Kidney (tissue), 22 donors: ENCODE measurements at regions of chrX and their contacts with region 1.

Region 1: DNA sequence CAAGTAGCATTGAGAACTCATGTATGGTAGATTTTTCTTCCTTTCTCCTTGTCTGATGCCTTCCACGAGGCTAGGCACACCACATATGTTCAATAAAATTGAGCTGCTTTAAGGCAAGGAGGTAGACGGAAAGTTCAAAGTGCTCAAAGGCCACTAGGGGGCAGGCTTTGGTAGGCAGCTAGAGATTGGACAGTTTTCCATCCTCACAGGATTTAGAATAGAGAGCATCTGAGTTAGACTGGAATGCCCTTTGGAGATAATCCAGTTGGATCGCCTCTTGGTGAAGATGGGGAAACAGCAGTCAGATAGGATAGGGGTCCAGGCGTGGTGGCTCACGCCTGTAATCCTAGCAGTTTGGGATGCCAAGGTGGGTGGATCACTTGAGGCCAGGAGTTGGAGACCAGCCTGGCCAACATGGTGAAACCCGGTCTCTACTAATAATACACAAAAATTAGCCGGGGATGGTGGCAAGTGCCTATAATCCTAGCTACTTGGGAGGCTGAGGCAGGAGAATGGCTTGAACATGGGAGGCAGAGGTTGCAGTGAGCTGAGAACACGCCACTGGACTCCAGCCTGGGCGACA is 30.4 kb downstream of the ELF4 start:
- DNase-seq: peak in 3 of 5 donors; percentile 55 to 87 (median 69)
- H3K4me3 ChIP-seq: no peak overlapping the region
- H3K27ac ChIP-seq: no peak overlapping the region
- H3K4me1 ChIP-seq: peaks cover 0 to 4% (median 0%) of the 10 kb centered on the region in 3 donors
- H3K27me3 ChIP-seq: no peaks in the 10 kb centered on the region
- CTCF ChIP-seq: peak; percentile 67

Region 2: DNA sequence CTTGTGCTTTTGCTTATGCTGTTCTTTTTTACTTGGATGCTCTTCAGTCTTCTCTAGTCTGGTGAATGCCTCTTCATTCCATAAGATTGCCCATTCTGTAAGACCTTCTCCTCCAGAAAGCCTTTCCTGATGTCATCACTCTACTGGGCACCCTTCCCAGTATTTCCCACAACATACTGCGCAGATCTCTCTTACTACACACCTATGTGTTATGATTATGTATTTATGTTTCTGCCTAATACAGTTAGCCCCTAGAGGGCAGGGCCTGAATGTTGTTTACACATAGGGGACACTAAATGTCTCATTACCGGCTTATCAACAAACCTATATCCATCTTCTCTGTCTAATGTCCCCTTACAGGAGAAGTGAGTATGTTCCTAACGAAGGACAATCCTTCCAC is 64.6 kb after region 1 on chrX:
- intact Hi-C with region 1: loop called (anchors 10 kb)
- DNase-seq: no peak
- H3K4me3 ChIP-seq: no peak overlapping the region
- H3K27ac ChIP-seq: no peak overlapping the region
- H3K4me1 ChIP-seq: no peaks in the 10 kb centered on the region
- H3K27me3 ChIP-seq: no peaks in the 10 kb centered on the region
- CTCF ChIP-seq: no peak

Region 3: GRCh38 chrX:130190801-130191200 is 110.9 kb after region 1 on chrX:
- intact Hi-C with region 1: loop called (anchors 5 kb)
- DNase-seq: no peak
- H3K4me3 ChIP-seq: no peak overlapping the region
- H3K27ac ChIP-seq: no peak overlapping the region
- H3K4me1 ChIP-seq: no peaks in the 10 kb centered on the region
- H3K27me3 ChIP-seq: no peaks in the 10 kb centered on the region
- CTCF ChIP-seq: no peak